Caco-2 (cell line): ENCODE measurements at regions of chr2 and their contacts with region 1.

Region 1: GRCh38 chr2:26345545-26346453 is at the start of gene SELENOI:
- DNase-seq: peak; percentile 99 to 100
- H3K4me3 ChIP-seq: peak within 1 kb of the TSS; percentile 66
- H3K4me3 Mint-ChIP-seq: peak within 1 kb of the TSS; percentile 100
- H3K27ac Mint-ChIP-seq: peak within 1 kb of the TSS; percentile 100
- H3K4me1 ChIP-seq: peaks cover 29% of the 10 kb centered on the region
- H3K4me1 Mint-ChIP-seq: peaks cover 26% of the 10 kb centered on the region
- H3K27me3 ChIP-seq: no peaks in the 10 kb centered on the region
- H3K27me3 Mint-ChIP-seq: no peaks in the 10 kb centered on the region
- CTCF ChIP-seq: no peak
- total RNA-seq, gene SELENOI: 61.3 and 68.9 TPM in 2 replicates

Region 2: DNA sequence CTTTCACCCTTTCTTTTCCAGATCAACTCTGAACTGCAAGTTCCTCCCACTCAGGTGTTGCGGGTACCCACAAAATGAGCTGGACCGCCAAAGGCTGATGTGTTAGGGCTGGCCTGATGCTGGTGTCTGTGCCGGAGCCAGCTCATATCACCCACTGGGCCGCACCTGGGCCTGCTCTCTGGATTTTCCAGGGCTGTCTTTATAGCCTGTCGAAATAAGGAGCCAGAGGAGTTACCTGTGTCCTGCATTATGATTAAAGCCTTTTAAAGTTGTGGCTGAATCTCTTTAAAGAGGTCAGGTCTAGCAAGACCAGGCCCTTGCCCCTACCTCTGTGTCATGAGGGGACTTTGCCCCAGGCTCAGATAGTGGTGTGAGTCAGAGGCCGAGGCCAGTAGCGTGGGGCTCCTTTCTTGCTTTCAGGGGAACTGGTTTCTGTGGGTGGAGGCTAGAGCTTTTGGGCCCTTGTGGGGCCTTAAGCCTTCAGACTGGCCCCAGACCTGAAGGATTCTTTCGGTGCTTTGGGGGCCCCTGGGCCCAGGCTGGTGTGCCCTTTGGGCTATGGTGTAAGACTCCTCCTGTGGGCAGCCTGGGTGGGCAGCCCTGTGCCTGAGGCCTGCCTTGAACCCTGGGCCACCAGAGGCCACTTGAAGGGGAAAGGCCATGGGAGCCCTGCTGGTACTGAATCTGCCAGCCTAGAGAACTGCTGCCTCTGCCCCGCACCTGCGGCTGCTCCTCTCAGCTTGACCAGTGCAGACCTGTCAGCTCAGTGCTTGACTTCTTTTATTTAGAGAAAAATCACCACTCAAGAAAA is 110.8 kb after region 1 on chr2:
- CTCF ChIA-PET with region 1: no interaction called
- POLR2A ChIA-PET with region 1: interaction called, 6 read pairs
- intact Hi-C with region 1: loop called (anchors 2 kb)
- DNase-seq: peak; percentile 91 to 97
- H3K4me3 ChIP-seq: no peak overlapping the region
- H3K4me3 Mint-ChIP-seq: no peak overlapping the region
- H3K27ac Mint-ChIP-seq: peak overlapping the region; percentile 83
- H3K4me1 ChIP-seq: peaks cover 53% of the 10 kb centered on the region
- H3K4me1 Mint-ChIP-seq: peaks cover 40% of the 10 kb centered on the region
- H3K27me3 ChIP-seq: no peaks in the 10 kb centered on the region
- H3K27me3 Mint-ChIP-seq: no peaks in the 10 kb centered on the region
- CTCF ChIP-seq: no peak

Region 3: DNA sequence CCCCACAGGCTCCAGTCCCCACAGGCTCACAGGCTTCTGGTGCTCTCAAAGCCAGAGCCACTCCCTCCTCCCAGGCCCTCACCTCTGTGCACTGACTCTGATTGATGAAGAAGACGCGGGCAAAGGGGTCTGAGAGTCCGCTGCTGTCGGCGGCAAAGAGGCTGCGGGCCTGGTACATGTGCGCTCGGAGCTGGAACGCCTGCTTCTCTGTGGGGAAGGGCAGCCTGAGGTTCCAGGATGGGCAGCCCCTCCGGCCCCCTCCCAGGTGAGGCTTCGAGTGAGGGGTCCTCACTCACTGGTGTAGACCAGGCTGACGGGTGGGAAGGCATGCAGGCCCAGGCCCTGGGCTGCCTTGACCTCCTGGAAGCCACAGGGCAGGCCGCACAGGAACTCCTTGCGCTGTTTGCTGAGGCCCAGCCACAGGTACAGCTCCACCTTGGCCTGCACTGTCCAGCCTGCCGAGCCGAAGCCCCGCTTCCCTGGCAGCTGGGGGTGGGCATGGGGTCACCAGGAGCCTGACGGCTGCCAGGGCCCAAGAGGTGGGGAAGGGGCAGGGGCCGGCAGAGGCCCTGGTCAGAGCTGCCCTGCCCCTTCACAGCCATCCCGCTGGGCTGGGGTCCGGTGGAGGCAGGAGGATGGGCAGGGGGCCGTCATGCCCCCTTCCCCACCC is 130.2 kb after region 1 on chr2:
- CTCF ChIA-PET with region 1: no interaction called
- POLR2A ChIA-PET with region 1: no interaction called
- intact Hi-C with region 1: no loop called
- DNase-seq: no peak
- H3K4me3 ChIP-seq: no peak overlapping the region
- H3K4me3 Mint-ChIP-seq: no peak overlapping the region
- H3K27ac Mint-ChIP-seq: no peak overlapping the region
- H3K4me1 ChIP-seq: peaks cover 11% of the 10 kb centered on the region
- H3K4me1 Mint-ChIP-seq: no peaks in the 10 kb centered on the region
- H3K27me3 ChIP-seq: no peaks in the 10 kb centered on the region
- H3K27me3 Mint-ChIP-seq: no peaks in the 10 kb centered on the region
- CTCF ChIP-seq: no peak

Region 4: GRCh38 chr2:26542194-26542455 is 196.3 kb after region 1 on chr2:
- CTCF ChIA-PET with region 1: no interaction called
- POLR2A ChIA-PET with region 1: no interaction called
- intact Hi-C with region 1: no loop called
- DNase-seq: no peak
- H3K4me3 ChIP-seq: no peak overlapping the region
- H3K4me3 Mint-ChIP-seq: no peak overlapping the region
- H3K27ac Mint-ChIP-seq: no peak overlapping the region
- H3K4me1 ChIP-seq: no peaks in the 10 kb centered on the region
- H3K4me1 Mint-ChIP-seq: no peaks in the 10 kb centered on the region
- H3K27me3 ChIP-seq: no peaks in the 10 kb centered on the region
- H3K27me3 Mint-ChIP-seq: peaks cover 6% of the 10 kb centered on the region
- CTCF ChIP-seq: no peak